Caco-2 (cell line): ENCODE measurements at regions of chr15 and their contacts with region 1.

Region 1: GRCh38 chr15:56821721-56822425 is 88.6 kb upstream of the ZNF280D start:
- DNase-seq: peak; percentile 50 to 64
- H3K4me3 ChIP-seq: no peak overlapping the region
- H3K4me3 Mint-ChIP-seq: no peak overlapping the region
- H3K27ac Mint-ChIP-seq: no peak overlapping the region
- H3K4me1 ChIP-seq: no peaks in the 10 kb centered on the region
- H3K4me1 Mint-ChIP-seq: no peaks in the 10 kb centered on the region
- H3K27me3 ChIP-seq: no peaks in the 10 kb centered on the region
- H3K27me3 Mint-ChIP-seq: peaks cover 6% of the 10 kb centered on the region
- CTCF ChIP-seq: peak; percentile 43 to 67

Region 2: DNA sequence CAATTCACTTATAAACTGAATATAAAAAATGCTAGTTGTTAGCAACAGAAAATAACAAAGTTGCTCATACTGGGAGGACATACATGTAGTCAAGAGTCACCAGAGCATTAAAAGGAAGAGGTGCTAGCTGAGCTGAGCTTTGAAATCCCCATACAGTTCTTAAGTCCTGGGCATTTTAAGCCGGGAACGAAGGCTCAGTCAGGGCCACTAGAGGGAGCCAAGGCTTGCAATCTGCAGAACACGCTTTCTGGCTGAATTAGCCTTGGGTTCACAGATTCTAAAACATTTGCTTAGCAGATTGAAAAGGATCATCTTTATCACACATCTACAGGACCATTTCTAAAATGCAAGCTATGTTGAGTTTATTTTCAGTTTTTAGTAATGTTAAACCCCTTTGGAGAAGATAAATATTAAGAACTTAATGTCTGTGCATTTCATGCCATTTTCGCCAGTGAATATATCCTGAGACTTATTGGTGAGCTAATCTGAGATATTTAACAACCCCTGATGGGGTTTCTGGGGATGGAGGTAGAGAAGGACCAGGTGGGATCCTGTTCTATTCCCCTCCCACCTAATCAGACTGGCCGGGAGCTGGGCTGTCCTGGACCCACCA is 330.7 kb before region 1 on chr15:
- CTCF ChIA-PET with region 1: no interaction called
- POLR2A ChIA-PET with region 1: no interaction called
- intact Hi-C with region 1: loop called (anchors 10 kb)
- DNase-seq: peak; percentile 55 to 67
- H3K4me3 ChIP-seq: no peak overlapping the region
- H3K4me3 Mint-ChIP-seq: no peak overlapping the region
- H3K27ac Mint-ChIP-seq: no peak overlapping the region
- H3K4me1 ChIP-seq: no peaks in the 10 kb centered on the region
- H3K4me1 Mint-ChIP-seq: peaks cover 7% of the 10 kb centered on the region
- H3K27me3 ChIP-seq: no peaks in the 10 kb centered on the region
- H3K27me3 Mint-ChIP-seq: peaks cover 10% of the 10 kb centered on the region
- CTCF ChIP-seq: peak; percentile 74 to 85

Region 3: GRCh38 chr15:56869573-56869972 is 47.7 kb after region 1 on chr15:
- CTCF ChIA-PET with region 1: interaction called, 3 read pairs
- POLR2A ChIA-PET with region 1: no interaction called
- intact Hi-C with region 1: loop called (anchors 1 kb)
- DNase-seq: peak; percentile 31 to 35
- H3K4me3 ChIP-seq: no peak overlapping the region
- H3K4me3 Mint-ChIP-seq: no peak overlapping the region
- H3K27ac Mint-ChIP-seq: no peak overlapping the region
- H3K4me1 ChIP-seq: no peaks in the 10 kb centered on the region
- H3K4me1 Mint-ChIP-seq: peaks cover 7% of the 10 kb centered on the region
- H3K27me3 ChIP-seq: no peaks in the 10 kb centered on the region
- H3K27me3 Mint-ChIP-seq: no peaks in the 10 kb centered on the region
- CTCF ChIP-seq: no peak

Region 4: DNA sequence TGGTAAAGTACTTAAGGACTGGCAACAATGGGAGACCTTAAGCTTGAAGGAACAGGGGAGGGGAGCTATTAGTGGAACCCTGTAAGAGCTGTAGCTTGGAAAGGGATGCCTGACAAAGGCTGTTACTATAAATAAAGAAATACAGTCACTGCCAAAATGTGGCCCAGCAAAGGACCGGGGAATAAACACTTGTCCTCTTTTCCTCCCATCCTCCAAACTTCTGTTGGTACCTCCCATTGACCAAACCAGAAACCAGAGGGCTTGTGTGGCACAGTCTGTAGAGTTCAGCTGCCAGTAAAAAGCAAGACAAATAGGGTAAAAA is 71.4 kb after region 1 on chr15:
- CTCF ChIA-PET with region 1: no interaction called
- POLR2A ChIA-PET with region 1: no interaction called
- intact Hi-C with region 1: no loop called
- DNase-seq: no peak
- H3K4me3 ChIP-seq: no peak overlapping the region
- H3K4me3 Mint-ChIP-seq: no peak overlapping the region
- H3K27ac Mint-ChIP-seq: no peak overlapping the region
- H3K4me1 ChIP-seq: no peaks in the 10 kb centered on the region; the same call in 1 of the 2 replicates
- H3K4me1 Mint-ChIP-seq: peaks cover 11% of the 10 kb centered on the region
- H3K27me3 ChIP-seq: no peaks in the 10 kb centered on the region
- H3K27me3 Mint-ChIP-seq: no peaks in the 10 kb centered on the region
- CTCF ChIP-seq: no peak

Region 5: DNA sequence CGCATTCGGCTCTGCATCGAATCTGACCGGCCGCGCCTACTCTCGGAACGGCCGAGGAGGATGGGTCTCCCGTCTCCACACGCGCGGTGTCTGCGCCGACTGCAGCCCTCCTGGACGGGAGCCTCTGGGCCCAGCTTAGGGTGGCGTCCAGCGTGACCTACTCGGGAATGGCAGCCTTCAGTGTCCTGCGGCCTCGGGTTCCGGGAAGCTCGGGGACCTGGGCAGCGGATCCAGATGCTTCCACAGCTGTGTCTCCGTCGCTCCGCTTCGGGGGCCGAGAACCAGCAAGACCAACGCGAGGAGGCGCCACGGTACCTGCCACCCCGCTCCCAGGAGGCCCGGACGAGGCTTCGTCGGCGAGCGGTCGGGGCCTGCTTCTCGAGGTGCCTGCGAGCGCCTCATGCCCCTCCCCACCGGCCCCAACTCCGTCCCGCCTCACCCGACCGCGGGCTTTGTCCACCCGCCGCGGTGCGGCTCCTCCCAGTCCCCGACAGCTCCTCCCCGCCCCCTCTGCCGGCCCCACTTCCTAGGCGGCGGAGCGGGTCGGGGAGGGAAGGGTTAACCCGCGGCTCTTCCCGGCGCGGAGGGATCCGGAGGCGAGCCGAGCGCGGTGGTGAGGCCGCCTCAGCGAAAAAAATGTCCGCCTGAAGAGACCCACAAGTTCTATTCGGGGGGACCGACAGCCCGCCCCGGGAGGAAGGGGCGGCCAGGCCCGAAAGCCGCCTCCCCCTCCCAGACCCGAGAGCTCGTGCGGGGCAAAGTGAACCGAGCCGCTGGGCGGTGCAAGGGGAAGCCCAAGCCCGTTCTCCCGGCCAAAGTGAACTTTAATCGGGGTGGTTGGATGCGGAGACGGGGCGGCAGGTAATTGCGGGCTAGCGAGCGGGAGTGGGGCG is 96.4 kb after region 1 on chr15 and contains the start of gene TCF12:
- CTCF ChIA-PET with region 1: interaction called, 3 read pairs
- POLR2A ChIA-PET with region 1: no interaction called
- intact Hi-C with region 1: loop called (anchors 1 kb)
- DNase-seq: peak; percentile 96 to 98
- H3K4me3 ChIP-seq: peak within 1 kb of the TSS; percentile 92
- H3K4me3 Mint-ChIP-seq: peak within 1 kb of the TSS; percentile 99
- H3K27ac Mint-ChIP-seq: peak within 1 kb of the TSS; percentile 97
- H3K4me1 ChIP-seq: peaks cover 19% of the 10 kb centered on the region
- H3K4me1 Mint-ChIP-seq: peaks cover 3% of the 10 kb centered on the region
- H3K27me3 ChIP-seq: no peaks in the 10 kb centered on the region
- H3K27me3 Mint-ChIP-seq: no peaks in the 10 kb centered on the region
- CTCF ChIP-seq: peak; percentile 37 to 45
- total RNA-seq, gene TCF12: 64.4 and 68.8 TPM in 2 replicates

Region 6: GRCh38 chr15:57138349-57138788 is 316.5 kb after region 1 on chr15:
- CTCF ChIA-PET with region 1: no interaction called
- POLR2A ChIA-PET with region 1: no interaction called
- intact Hi-C with region 1: loop called (anchors 1 kb)
- DNase-seq: peak; percentile 60 to 72
- H3K4me3 ChIP-seq: no peak overlapping the region
- H3K4me3 Mint-ChIP-seq: no peak overlapping the region
- H3K27ac Mint-ChIP-seq: no peak overlapping the region
- H3K4me1 ChIP-seq: no peaks in the 10 kb centered on the region
- H3K4me1 Mint-ChIP-seq: peaks cover 2% of the 10 kb centered on the region
- H3K27me3 ChIP-seq: no peaks in the 10 kb centered on the region
- H3K27me3 Mint-ChIP-seq: no peaks in the 10 kb centered on the region
- CTCF ChIP-seq: peak; percentile 84 to 87

Region 7: GRCh38 chr15:57213862-57214261 is 392.0 kb after region 1 on chr15:
- CTCF ChIA-PET with region 1: no interaction called
- POLR2A ChIA-PET with region 1: no interaction called
- intact Hi-C with region 1: loop called (anchors 1 kb)
- DNase-seq: peak in 1 of 2 experiments; percentile 46
- H3K4me3 ChIP-seq: no peak overlapping the region
- H3K4me3 Mint-ChIP-seq: peak overlapping the region; percentile 37
- H3K27ac Mint-ChIP-seq: no peak overlapping the region
- H3K4me1 ChIP-seq: peaks cover 4% of the 10 kb centered on the region
- H3K4me1 Mint-ChIP-seq: peaks cover 21% of the 10 kb centered on the region
- H3K27me3 ChIP-seq: no peaks in the 10 kb centered on the region
- H3K27me3 Mint-ChIP-seq: no peaks in the 10 kb centered on the region
- CTCF ChIP-seq: peak in 1 of 2 experiments; percentile 28

Region 8: GRCh38 chr15:57541805-57542504 is 720.1 kb after region 1 on chr15:
- CTCF ChIA-PET with region 1: no interaction called
- POLR2A ChIA-PET with region 1: no interaction called
- intact Hi-C with region 1: loop called (anchors 10 kb)
- DNase-seq: peak; percentile 74 to 80
- H3K4me3 ChIP-seq: no peak overlapping the region
- H3K4me3 Mint-ChIP-seq: no peak overlapping the region
- H3K27ac Mint-ChIP-seq: no peak overlapping the region
- H3K4me1 ChIP-seq: 0 out of 2 replicates have a peak, but pooled peaks cover 3% of the 10 kb centered on the region
- H3K4me1 Mint-ChIP-seq: peaks cover 6% of the 10 kb centered on the region
- H3K27me3 ChIP-seq: no peaks in the 10 kb centered on the region
- H3K27me3 Mint-ChIP-seq: no peaks in the 10 kb centered on the region
- CTCF ChIP-seq: peak; percentile 76 to 84